ENCODE measurements at regions of chr9 and their contacts with region 1.

Region 1: DNA sequence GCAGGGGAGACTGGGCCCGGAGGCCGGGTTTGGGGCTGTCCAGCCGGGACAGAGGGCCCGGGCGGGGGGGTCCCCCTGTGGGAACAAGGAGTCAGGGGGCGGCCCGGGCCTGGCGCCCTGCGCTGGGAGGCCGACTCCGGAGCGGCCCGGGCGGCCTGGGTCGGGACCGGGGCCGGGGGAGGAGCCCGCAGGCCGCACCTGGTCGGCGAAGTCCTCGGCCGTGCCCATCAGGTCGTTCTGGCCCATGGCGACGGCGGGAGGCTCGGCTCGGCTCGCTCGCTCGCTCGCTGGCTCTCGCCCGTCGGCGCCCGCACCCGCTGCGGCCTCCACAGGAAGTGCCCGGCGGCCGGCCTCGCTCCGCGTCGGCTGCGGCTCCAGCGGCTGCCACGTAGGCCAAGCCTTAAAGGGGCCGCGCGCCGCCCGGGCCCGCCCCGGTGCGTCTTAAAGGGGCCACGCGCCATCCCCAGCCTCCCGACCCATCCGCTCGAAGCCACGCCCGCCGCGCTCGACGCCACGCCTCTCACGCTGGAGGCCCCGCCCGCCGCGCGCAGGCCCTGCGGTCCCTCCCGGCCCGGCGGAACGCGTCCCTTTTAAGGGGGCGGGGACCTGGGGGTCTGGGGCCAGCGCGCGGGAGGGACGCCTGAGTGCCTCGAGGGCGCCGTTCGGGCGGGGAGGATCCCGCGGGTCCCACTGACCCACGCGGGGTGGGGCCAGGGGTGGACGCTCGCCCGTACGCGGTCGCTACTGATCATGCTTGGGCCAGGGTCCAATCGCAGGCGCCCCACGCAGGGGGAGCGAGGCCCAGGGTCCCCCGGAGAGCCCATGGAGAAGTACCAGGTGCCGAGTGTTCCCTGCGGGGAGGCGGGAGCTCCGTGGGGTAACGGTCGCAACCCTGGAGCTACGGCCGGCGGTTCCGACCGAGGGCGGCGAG is at the starts of genes STKLD1 and SURF4:
- DNase-seq: peak; percentile 90 to 95
- ATAC-seq: peak; percentile 89 to 91
- H3K4me3 ChIP-seq: peak within 1 kb of the TSS; percentile 77 to 96 (median 88)
- H3K27ac ChIP-seq: peak within 1 kb of the TSS; percentile 77 to 97 (median 90)
- H3K4me1 ChIP-seq: peaks cover 35 to 43% of the 10 kb centered on the region in 2 donors
- H3K27me3 ChIP-seq: no peaks in the 10 kb centered on the region
- CTCF ChIP-seq: peak in 2 of 5 experiments; percentile 50 to 55
- POLR2A ChIP-seq: peak; percentile 95 to 97
- total RNA-seq, gene STKLD1: 0.35 to 1.4 (median 1.1) TPM in 3 of 4 donors, not detected in the other
- total RNA-seq, gene SURF4: 62.9 to 98.4 (median 73.4) TPM

Region 2: GRCh38 chr9:133320421-133320881 is 55.5 kb before region 1 on chr9:
- in situ Hi-C with region 1: no loop called
- intact Hi-C with region 1: no loop called
- DNase-seq: no peak
- ATAC-seq: no peak
- H3K4me3 ChIP-seq: no peak overlapping the region
- H3K27ac ChIP-seq: no peak overlapping the region
- H3K4me1 ChIP-seq: no peaks in the 10 kb centered on the region
- H3K27me3 ChIP-seq: no peaks in the 10 kb centered on the region
- CTCF ChIP-seq: no peak
- POLR2A ChIP-seq: no peak

Region 3: GRCh38 chr9:133335878-133336811 is 39.8 kb before region 1 on chr9 and contains the start of gene SURF6:
- in situ Hi-C with region 1: no loop called
- intact Hi-C with region 1: loop called (anchors 1 kb)
- DNase-seq: peak; percentile 85 to 88
- ATAC-seq: peak; percentile 92 to 95
- H3K4me3 ChIP-seq: peak within 1 kb of the TSS; percentile 75 to 96 (median 90)
- H3K27ac ChIP-seq: peak within 1 kb of the TSS; percentile 80 to 90 (median 87)
- H3K4me1 ChIP-seq: peaks cover 22 to 30% of the 10 kb centered on the region in 2 donors
- H3K27me3 ChIP-seq: no peaks in the 10 kb centered on the region
- CTCF ChIP-seq: peak in 1 of 5 experiments; percentile 13
- POLR2A ChIP-seq: peak; percentile 65 to 70
- total RNA-seq, gene SURF6: 13.4 to 34.2 (median 28.0) TPM

Region 4: DNA sequence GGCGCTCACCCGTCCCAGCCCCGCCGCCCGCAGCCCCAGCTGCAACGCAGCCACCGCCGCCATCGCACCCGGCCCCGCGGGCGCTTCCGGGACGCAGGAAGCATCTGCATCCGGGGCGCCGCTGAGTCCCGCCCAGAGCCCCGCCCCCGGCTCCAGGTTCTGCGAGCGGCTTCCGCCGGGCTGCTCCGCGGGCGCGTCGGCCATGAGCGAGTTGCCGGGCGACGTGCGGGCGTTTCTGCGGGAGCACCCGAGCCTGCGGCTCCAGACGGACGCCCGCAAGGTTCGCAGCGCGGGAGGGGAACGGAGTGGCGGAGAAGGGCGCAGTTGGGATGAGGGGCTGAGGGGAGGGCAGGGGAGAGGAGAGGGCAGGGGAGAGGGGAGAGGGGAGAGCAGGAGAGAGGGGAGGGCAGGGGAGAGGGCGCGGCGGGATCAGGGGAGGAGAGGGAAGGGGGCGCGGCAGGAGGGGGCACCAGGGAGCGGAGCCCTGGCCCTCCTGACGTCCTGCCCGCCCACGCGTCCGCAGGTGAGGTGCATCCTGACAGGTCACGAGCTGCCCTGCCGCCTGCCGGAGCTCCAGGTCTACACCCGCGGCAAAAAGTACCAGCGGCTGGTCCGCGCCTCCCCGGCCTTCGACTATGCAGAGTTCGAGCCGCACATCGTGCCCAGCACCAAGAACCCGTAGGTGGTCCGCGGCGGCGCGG is 19.4 kb before region 1 on chr9 and contains the starts of genes SURF1 and SURF2:
- in situ Hi-C with region 1: no loop called
- intact Hi-C with region 1: loop called (anchors 2 kb)
- DNase-seq: peak; percentile 73 to 83
- ATAC-seq: peak; percentile 84 to 85
- H3K4me3 ChIP-seq: peak within 1 kb of the TSS; percentile 72 to 88 (median 76)
- H3K27ac ChIP-seq: peak within 1 kb of the TSS; percentile 66 to 87 (median 82)
- H3K4me1 ChIP-seq: peaks cover 22 to 28% of the 10 kb centered on the region in 2 donors
- H3K27me3 ChIP-seq: no peaks in the 10 kb centered on the region
- CTCF ChIP-seq: no peak
- POLR2A ChIP-seq: peak; percentile 58 to 67
- total RNA-seq, gene SURF1: 33.8 to 68.9 (median 56.0) TPM
- total RNA-seq, gene SURF2: 14.3 to 26.4 (median 24.8) TPM

Region 5: DNA sequence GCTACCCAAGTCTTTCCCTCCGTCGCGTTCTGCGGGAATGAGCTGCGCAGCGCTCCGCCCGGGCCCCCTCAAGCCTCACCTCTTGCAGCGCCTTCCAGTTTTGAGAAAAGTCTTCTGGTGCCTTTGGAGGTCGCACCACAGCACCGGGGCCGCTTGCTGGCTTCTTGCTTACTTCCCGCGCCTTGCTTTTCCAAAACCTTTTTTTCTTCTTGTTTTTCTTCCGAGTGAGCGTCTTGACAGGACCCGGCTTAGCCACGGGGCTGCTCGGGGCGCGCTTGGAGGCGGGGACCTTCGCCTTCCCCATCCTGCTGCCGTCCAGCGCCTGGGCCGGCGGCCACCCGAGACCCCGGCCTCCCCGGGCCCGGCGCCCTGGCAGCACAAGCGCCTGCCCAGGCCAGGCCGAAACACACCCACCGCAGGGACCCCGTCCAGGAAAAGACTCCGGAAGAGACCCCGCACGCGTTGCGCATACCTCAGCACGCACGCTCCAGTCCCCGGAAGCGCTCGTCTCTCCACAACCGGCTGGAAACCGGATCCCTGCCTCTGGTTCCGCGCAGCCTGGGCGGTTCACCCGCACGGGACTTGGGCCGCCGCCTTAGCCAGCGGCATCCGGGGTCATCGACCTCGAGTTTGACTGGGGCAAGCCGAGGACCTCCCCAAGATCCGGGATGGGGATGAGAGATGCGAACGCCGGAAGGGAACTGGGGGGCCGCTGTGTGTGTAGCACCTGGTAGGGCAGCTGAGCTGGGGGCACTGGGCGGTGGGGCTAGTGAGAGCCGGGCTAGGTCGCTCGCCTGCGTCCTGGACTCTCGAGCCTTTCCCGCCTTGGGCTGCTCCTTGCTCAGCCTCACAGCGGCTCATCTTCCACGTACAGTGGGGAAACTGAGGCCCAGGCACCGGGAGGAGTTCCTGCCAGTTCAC is 41.8 kb after region 1 on chr9 and contains the start of gene REXO4:
- in situ Hi-C with region 1: no loop called
- intact Hi-C with region 1: loop called (anchors 5 kb)
- DNase-seq: peak; percentile 58 to 74
- ATAC-seq: peak; percentile 94 to 95
- H3K4me3 ChIP-seq: peak within 1 kb of the TSS; percentile 79 to 82 (median 82)
- H3K27ac ChIP-seq: peak within 1 kb of the TSS; percentile 74 to 86 (median 84)
- H3K4me1 ChIP-seq: peaks cover 21 to 23% of the 10 kb centered on the region in 2 donors
- H3K27me3 ChIP-seq: no peaks in the 10 kb centered on the region
- CTCF ChIP-seq: peak in 1 of 5 experiments; percentile 7
- POLR2A ChIP-seq: peak; percentile 17 to 45
- total RNA-seq, gene REXO4: 26.1 to 42.5 (median 34.6) TPM

Region 6: GRCh38 chr9:133459476-133460404 is 83.8 kb after region 1 on chr9 and contains the start of gene CACFD1:
- in situ Hi-C with region 1: no loop called
- intact Hi-C with region 1: loop called (anchors 1 kb)
- DNase-seq: peak; percentile 96
- ATAC-seq: peak; percentile 91 to 94
- H3K4me3 ChIP-seq: peak within 1 kb of the TSS; percentile 75 to 97 (median 79)
- H3K27ac ChIP-seq: peak within 1 kb of the TSS; percentile 91 to 99 (median 92)
- H3K4me1 ChIP-seq: peaks cover 7 to 19% of the 10 kb centered on the region in 2 donors
- H3K27me3 ChIP-seq: no peaks in the 10 kb centered on the region
- CTCF ChIP-seq: no peak
- POLR2A ChIP-seq: peak; percentile 45 to 72
- total RNA-seq, gene CACFD1: 7.0 to 28.3 (median 10.1) TPM

Region 7: DNA sequence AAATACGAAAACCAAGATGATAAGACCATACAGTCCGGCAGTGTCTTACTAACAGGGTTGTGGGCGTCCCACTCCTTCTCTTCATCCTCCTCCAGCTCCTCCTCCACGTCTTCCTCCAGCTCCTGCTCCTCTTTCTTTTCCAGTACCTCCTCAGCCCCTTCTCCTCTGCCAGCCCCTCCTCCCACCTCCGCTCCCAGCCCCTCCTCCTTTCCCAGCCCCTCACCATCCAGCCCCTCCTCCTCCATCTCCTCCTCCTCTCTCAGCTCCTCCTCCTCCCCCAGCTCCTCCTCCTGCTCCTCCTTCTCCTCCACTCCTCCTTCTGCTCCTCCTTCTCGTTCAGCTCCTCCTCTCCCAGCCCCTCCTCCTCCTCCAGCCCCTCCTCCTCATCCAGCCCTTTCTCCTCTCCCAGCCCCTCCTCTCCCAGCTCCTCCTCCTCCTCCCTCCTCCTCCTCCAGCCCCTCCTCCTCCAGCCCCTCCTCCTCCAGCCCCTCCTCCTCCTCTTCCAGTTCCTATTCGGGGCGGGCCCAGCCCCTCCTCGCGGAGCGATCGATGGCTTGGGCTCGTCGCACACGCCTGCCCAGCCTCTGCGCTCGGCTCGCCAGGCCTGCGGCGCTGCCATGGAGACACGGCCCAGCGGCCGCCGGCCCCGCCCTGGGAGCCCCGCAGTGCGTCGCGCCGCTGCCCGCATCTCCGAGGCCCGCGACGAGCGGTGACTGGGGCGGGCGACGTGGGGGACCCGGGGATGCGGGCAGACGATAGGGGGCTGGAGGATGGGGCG is 649.0 kb after region 1 on chr9 and contains the start of gene BRD3OS:
- in situ Hi-C with region 1: no loop called
- intact Hi-C with region 1: loop called (anchors 10 kb)
- DNase-seq: peak; percentile 95 to 96
- ATAC-seq: peak; percentile 99
- H3K4me3 ChIP-seq: peak within 1 kb of the TSS; percentile 63 to 93 (median 80)
- H3K27ac ChIP-seq: peak within 1 kb of the TSS; percentile 42 to 75 (median 68)
- H3K4me1 ChIP-seq: peaks cover 6 to 12% of the 10 kb centered on the region in 2 donors
- H3K27me3 ChIP-seq: no peaks in the 10 kb centered on the region
- CTCF ChIP-seq: no peak
- POLR2A ChIP-seq: no peak
- total RNA-seq, gene BRD3OS: 0.76 to 9.3 (median 5.8) TPM

Measured in gastrocnemius medialis (tissue), 4 donors.